GM12878 (cell line): ENCODE measurements at regions of chr4 and their contacts with region 1.

Region 1: GRCh38 chr4:159016593-159017024 is 86.3 kb upstream of the RAPGEF2 start:
- DNase-seq: peak; percentile 56
- ATAC-seq: peak; percentile 74
- H3K4me3 ChIP-seq: no peak overlapping the region
- H3K27ac ChIP-seq: no peak overlapping the region
- H3K4me1 ChIP-seq: peaks cover 24% of the 10 kb centered on the region
- H3K27me3 ChIP-seq: no peaks in the 10 kb centered on the region
- CTCF ChIP-seq: peak; percentile 46 to 59 (median 49); a peak in 5 of 6 replicates
- EP300 ChIP-seq: 0 out of 4 replicates have a peak, but pooled peaks of 1 of the 2 experiments have one; percentile 19
- POLR2A ChIP-seq: no peak
- RAD21 ChIP-seq: peak; percentile 35; the same call in 1 of the 2 replicates

Region 2: DNA sequence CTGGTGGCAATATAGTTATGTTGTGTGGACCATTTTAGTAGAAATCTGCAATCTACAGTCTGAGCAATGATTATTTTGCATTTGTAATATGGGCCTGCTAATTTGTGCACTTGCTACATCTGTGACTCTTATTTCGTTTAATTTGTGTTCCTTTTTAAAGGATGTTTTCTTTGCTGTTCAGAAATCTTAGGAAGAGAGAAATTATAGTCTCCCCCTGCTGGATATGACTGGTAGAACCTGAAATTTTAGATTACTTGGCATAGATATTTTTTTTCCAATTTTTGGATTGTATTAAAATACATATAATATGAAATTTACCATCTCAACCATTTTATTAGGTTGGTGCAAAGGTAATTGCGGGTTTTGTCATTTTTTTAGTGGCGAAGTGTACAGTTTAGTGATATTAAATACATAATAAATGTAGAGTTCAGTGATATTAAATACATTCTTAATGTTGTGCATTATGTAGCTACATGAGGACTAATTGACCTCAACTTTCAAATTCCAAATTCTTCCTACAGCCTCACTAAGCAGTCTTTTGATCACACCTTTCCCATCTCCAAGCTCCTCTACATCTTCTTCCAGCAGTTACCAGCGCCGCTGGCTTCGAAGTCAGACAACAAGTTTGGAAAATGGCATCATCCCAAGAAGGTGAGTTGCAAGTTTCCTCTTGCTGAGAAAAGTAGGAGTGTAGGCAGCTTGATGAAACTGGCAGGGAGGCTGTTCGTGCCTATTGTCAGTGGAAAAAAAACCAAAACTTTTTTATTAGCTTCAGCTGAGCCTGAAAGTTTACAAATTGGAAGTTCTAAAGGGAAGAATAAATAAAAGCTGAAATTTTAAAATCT is 165.6 kb before region 1 on chr4:
- CTCF ChIA-PET with region 1: interaction called, 68 read pairs
- POLR2A ChIA-PET with region 1: no interaction called
- RAD21 ChIA-PET with region 1: interaction called, 80 read pairs
- SMC1A ChIA-PET with region 1: interaction called, 11 read pairs
- in situ Hi-C with region 1: no loop called
- intact Hi-C with region 1: no loop called
- DNase-seq: no peak
- ATAC-seq: peak; percentile 35; the same call in 1 of the 3 replicates
- H3K4me3 ChIP-seq: no peak overlapping the region
- H3K27ac ChIP-seq: no peak overlapping the region
- H3K4me1 ChIP-seq: no peaks in the 10 kb centered on the region
- H3K27me3 ChIP-seq: no peaks in the 10 kb centered on the region; a peak in 1 of 4 replicates
- CTCF ChIP-seq: peak; percentile 49 to 55 (median 53); a peak in 5 of 6 replicates
- EP300 ChIP-seq: no peak
- POLR2A ChIP-seq: no peak
- RAD21 ChIP-seq: peak; percentile 50

Region 3: DNA sequence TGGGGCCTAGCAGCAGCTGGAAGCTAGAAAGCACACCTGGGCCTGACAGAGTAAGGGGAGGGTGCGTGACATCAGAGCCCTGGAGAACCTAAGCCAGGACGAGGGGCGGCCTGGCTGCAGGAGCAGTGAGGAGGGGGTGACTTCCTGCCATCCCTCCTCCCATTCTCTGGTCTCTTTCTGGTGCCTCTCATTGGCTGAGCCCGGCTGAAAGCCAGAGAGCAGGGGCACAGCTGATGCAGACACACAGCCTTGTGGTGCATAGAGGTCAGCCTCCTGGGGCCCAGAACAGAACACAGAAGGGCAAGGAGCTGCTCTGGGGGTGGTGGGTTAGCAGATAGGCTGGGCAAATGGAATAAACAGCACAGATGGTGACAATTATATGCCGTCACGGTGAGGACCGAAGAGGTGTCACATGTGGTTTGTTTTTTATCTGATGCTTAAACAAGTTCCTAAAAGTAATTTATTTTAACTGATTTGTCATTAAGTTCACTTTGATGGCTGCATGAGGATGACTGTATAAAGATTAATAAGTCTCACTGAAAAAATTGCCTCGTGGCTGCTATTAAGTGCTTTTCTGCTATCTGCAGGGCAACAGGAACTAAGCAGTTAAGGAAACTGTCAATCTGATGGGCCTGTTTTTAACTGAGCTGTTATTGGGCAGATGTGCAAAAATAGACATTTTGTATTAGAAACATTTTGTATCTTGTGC is 145.8 kb before region 1 on chr4:
- CTCF ChIA-PET with region 1: interaction called, 26 read pairs
- POLR2A ChIA-PET with region 1: interaction called, 7 read pairs
- RAD21 ChIA-PET with region 1: interaction called, 33 read pairs
- SMC1A ChIA-PET with region 1: interaction called, 21 read pairs
- in situ Hi-C with region 1: no loop called
- intact Hi-C with region 1: no loop called
- DNase-seq: no peak
- ATAC-seq: no peak; the same call in 2 of the 3 replicates
- H3K4me3 ChIP-seq: no peak overlapping the region
- H3K27ac ChIP-seq: no peak overlapping the region
- H3K4me1 ChIP-seq: no peaks in the 10 kb centered on the region
- H3K27me3 ChIP-seq: no peaks in the 10 kb centered on the region
- CTCF ChIP-seq: no peak
- EP300 ChIP-seq: no peak
- POLR2A ChIP-seq: no peak
- RAD21 ChIP-seq: no peak

Region 4: DNA sequence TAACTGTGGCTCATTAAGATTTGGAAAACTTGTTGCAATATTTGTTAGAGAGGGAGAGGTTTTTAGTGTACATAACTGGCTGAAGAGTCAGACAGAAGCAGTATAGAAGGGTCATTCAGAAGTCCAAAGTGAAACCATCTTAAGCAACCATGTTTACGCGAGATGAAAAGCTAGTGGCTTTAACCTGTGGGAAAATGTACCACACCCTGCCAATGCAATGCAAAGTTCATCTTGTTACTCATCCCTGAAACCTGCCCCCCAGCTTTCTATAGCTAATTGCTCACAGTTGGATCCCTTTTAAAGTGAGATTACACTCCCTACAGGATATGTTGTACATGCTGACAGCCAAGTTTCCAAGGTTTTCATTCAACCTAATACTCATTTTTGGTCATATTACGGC is 10.4 kb before region 1 on chr4:
- CTCF ChIA-PET with region 1: interaction called, 8 read pairs
- POLR2A ChIA-PET with region 1: no interaction called
- RAD21 ChIA-PET with region 1: interaction called, 5 read pairs
- SMC1A ChIA-PET with region 1: interaction called, 28 read pairs
- in situ Hi-C with region 1: no loop called
- intact Hi-C with region 1: no loop called
- DNase-seq: no peak
- ATAC-seq: peak; percentile 68
- H3K4me3 ChIP-seq: no peak overlapping the region
- H3K27ac ChIP-seq: no peak overlapping the region
- H3K4me1 ChIP-seq: no peaks in the 10 kb centered on the region
- H3K27me3 ChIP-seq: no peaks in the 10 kb centered on the region
- CTCF ChIP-seq: no peak
- EP300 ChIP-seq: no peak
- POLR2A ChIP-seq: no peak
- RAD21 ChIP-seq: no peak

Region 5: DNA sequence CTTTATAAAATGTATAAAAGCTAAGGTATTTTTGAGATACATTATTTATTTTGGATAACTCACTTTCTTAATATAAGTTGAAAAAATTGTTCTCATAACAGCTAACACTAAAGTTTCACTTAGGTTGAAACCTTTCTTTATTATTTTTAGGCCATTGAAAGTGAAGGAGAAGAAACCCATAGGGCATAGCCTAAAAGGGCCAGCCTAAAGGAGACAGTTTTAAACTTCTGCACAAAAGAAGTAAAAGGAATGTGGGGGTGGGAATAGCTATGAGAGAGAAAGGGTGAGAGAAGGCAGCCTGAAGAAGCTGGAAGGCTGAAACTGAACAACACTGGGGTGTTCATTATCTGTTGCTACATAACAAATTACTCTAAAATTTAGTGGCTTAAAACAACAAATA is 28.7 kb after region 1 on chr4:
- CTCF ChIA-PET with region 1: interaction called, 19 read pairs
- POLR2A ChIA-PET with region 1: interaction called, 3 read pairs
- RAD21 ChIA-PET with region 1: interaction called, 8 read pairs
- SMC1A ChIA-PET with region 1: interaction called, 10 read pairs
- in situ Hi-C with region 1: no loop called
- intact Hi-C with region 1: no loop called
- DNase-seq: no peak
- ATAC-seq: peak; percentile 39
- H3K4me3 ChIP-seq: no peak overlapping the region
- H3K27ac ChIP-seq: no peak overlapping the region
- H3K4me1 ChIP-seq: peaks cover 9% of the 10 kb centered on the region; the same call in 1 of the 2 replicates
- H3K27me3 ChIP-seq: no peaks in the 10 kb centered on the region
- CTCF ChIP-seq: no peak
- EP300 ChIP-seq: no peak
- POLR2A ChIP-seq: no peak
- RAD21 ChIP-seq: no peak

Region 6: GRCh38 chr4:159102622-159103383 is 86.2 kb after region 1 on chr4 and contains the start of gene RAPGEF2:
- CTCF ChIA-PET with region 1: interaction called, 5 read pairs
- POLR2A ChIA-PET with region 1: no interaction called
- RAD21 ChIA-PET with region 1: interaction called, 6 read pairs
- SMC1A ChIA-PET with region 1: interaction called, 22 read pairs
- in situ Hi-C with region 1: no loop called
- intact Hi-C with region 1: loop called (anchors 5 kb)
- DNase-seq: peak; percentile 52
- ATAC-seq: peak; percentile 82
- H3K4me3 ChIP-seq: peak within 1 kb of the TSS; percentile 87
- H3K27ac ChIP-seq: peak within 1 kb of the TSS; percentile 76
- H3K4me1 ChIP-seq: peaks cover 14% of the 10 kb centered on the region
- H3K27me3 ChIP-seq: no peaks in the 10 kb centered on the region
- CTCF ChIP-seq: no peak
- EP300 ChIP-seq: 0 out of 4 replicates have a peak, but pooled peaks of 1 of the 2 experiments have one; percentile 10
- POLR2A ChIP-seq: peak; percentile 85
- RAD21 ChIP-seq: no peak
- polyA plus RNA-seq, gene RAPGEF2: 0.31 to 0.44 TPM

Region 7: DNA sequence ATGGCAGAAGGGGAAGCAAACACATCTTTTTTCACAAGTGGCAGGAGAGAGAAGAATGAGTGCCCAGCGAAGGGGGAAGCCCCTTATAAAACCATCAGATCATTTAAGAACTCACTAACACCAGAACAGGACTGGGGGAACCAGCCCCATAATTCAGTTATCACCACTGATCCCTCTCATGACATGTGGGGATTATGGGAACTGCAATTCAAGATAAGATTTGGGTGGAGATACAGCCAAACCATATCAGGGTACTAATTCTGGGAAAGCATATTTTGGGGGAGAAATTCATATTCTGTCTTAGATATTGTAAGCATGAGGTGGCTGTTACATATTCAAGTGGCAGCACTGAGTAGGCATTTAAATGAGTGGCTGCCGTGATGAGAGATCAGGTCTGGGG is 174.0 kb after region 1 on chr4:
- CTCF ChIA-PET with region 1: no interaction called
- POLR2A ChIA-PET with region 1: no interaction called
- RAD21 ChIA-PET with region 1: no interaction called
- SMC1A ChIA-PET with region 1: no interaction called
- in situ Hi-C with region 1: no loop called
- intact Hi-C with region 1: no loop called
- DNase-seq: no peak
- ATAC-seq: no peak
- H3K4me3 ChIP-seq: no peak overlapping the region
- H3K27ac ChIP-seq: no peak overlapping the region
- H3K4me1 ChIP-seq: no peaks in the 10 kb centered on the region
- H3K27me3 ChIP-seq: no peaks in the 10 kb centered on the region
- CTCF ChIP-seq: no peak
- EP300 ChIP-seq: no peak
- POLR2A ChIP-seq: no peak
- RAD21 ChIP-seq: no peak

Region 8: GRCh38 chr4:159206427-159206871 is 189.8 kb after region 1 on chr4:
- CTCF ChIA-PET with region 1: interaction called, 15 read pairs
- POLR2A ChIA-PET with region 1: no interaction called
- RAD21 ChIA-PET with region 1: interaction called, 7 read pairs
- SMC1A ChIA-PET with region 1: interaction called, 29 read pairs
- in situ Hi-C with region 1: no loop called
- intact Hi-C with region 1: no loop called
- DNase-seq: peak; percentile 83
- ATAC-seq: peak; percentile 84
- H3K4me3 ChIP-seq: no peak overlapping the region
- H3K27ac ChIP-seq: peak overlapping the region; percentile 60
- H3K4me1 ChIP-seq: peaks cover 27% of the 10 kb centered on the region
- H3K27me3 ChIP-seq: no peaks in the 10 kb centered on the region
- CTCF ChIP-seq: no peak
- EP300 ChIP-seq: no peak
- POLR2A ChIP-seq: no peak
- RAD21 ChIP-seq: no peak

Region 9: DNA sequence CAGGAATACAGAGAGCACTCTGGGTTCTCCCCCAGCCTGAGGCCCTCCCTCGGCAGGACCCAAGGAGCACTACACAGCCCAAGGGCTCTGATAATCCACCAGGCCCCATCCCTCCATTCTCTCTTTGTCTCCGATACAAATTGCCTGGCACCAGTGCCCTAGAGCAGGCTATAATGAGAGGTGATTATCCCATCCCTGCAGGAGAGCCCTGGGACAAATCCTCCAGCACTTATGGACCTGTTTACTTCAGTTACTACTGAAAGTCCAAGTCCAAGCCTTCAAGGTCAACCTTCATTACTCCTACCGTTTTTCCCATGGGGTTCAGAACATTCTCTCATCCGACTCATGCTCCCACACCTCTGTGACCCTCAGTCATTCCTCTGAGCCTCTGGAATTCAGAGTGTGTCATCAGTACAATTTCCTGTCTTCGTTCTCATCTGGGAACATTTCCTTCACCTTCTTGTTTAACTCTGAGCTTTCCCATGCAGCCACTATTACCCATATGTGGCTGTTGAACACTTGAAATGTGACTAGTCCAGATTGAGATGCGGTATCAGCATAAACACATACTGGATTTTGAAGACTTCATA is 385.3 kb after region 1 on chr4:
- CTCF ChIA-PET with region 1: no interaction called
- POLR2A ChIA-PET with region 1: no interaction called
- RAD21 ChIA-PET with region 1: no interaction called
- SMC1A ChIA-PET with region 1: no interaction called
- in situ Hi-C with region 1: no loop called
- intact Hi-C with region 1: no loop called
- DNase-seq: no peak
- ATAC-seq: no peak
- H3K4me3 ChIP-seq: no peak overlapping the region
- H3K27ac ChIP-seq: no peak overlapping the region
- H3K4me1 ChIP-seq: no peaks in the 10 kb centered on the region
- H3K27me3 ChIP-seq: peaks cover 0 to 2% of the 10 kb centered on the region in 2 experiments; a peak in 2 of 4 replicates
- CTCF ChIP-seq: no peak
- EP300 ChIP-seq: no peak
- POLR2A ChIP-seq: no peak
- RAD21 ChIP-seq: no peak